H1 (cell line): ENCODE measurements at regions of chr19 and their contacts with region 1.

Region 1: GRCh38 chr19:53867225-53868090 is at the start of gene MYADM:
- DNase-seq: peak; percentile 96 to 100
- H3K4me3 ChIP-seq: peak within 1 kb of the TSS; percentile 69 to 94 (median 79)
- H3K27ac ChIP-seq: peak within 1 kb of the TSS; percentile 96
- H3K4me1 ChIP-seq: peaks cover 0 to 13% (median 8%) of the 10 kb centered on the region in 4 experiments; a peak in 6 of 7 replicates
- H3K27me3 ChIP-seq: no peaks in the 10 kb centered on the region
- CTCF ChIP-seq: no peak
- EP300 ChIP-seq: peak; percentile 85 to 99
- POLR2A ChIP-seq: peak in 1 of 2 experiments; percentile 72; a peak in 2 of 3 replicates
- RAD21 ChIP-seq: no peak
- total RNA-seq, gene MYADM: 70.1 and 70.5 TPM in 2 replicates

Region 2: DNA sequence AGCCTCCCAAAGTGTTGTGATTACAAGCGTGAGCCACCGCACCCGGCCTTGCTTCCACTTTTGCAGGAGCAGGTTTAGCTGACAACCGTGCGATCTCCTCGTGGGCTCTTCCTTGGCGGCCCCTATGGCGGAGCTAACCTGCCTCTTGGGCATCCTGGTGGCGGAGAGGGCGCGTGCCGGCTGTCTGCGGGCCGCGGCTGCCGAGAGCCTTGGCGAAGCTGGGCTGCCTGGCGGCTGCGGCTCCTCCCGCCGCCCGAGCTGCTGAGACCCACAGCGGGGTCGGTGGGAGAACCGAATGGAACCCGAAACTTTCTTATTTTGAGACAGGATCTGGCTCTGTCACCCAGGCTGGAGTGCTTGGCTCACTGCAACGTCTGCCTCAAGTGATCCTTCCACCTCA is 99.1 kb before region 1 on chr19:
- CTCF ChIA-PET with region 1: no interaction called
- POLR2A ChIA-PET with region 1: no interaction called
- DNase-seq: no peak
- H3K4me3 ChIP-seq: no peak overlapping the region
- H3K27ac ChIP-seq: no peak overlapping the region
- H3K4me1 ChIP-seq: peaks cover 0 to 16% (median 4%) of the 10 kb centered on the region in 4 experiments; a peak in 5 of 7 replicates
- H3K27me3 ChIP-seq: no peaks in the 10 kb centered on the region
- CTCF ChIP-seq: no peak
- EP300 ChIP-seq: no peak
- POLR2A ChIP-seq: no peak
- RAD21 ChIP-seq: no peak

Region 3: DNA sequence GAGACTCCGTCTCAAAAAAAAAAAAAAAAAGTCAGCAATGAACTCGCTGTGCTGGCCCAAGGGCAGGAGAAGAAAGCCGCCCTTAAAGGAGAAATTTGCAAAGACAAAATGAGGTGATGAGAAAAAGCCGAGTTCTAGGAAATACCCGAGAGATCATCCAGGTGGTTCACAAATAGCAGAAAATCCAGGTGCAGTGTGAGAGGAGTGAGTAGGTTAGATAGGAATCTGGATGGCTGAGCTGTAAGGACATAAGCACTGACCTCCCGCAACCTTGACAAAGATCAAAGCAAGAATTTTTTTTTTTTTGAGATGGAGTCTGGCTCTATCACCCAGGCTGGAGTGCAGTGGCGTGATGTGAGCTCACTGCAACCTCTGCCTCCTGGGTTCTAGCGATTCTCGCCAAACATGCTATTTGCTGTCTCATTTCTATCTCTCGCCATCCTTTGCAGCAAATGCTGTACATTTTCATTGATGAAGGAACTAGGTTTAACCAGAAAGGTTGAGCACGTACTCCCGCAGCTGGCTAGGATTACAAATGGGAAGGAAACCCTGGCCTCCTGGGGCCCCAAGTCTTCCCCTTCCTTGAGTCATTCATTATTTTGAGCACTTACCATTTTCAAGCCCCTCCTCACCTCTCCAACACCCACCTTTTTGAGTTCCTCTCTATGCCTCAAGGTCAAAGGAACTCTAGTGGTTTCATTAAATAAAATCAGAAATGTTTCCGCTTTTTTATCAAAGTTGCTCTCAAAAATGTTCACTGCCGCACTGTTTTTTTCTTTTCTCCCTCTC is 82.2 kb before region 1 on chr19:
- CTCF ChIA-PET with region 1: no interaction called
- POLR2A ChIA-PET with region 1: interaction called, 12 read pairs
- DNase-seq: no peak
- H3K4me3 ChIP-seq: no peak overlapping the region
- H3K27ac ChIP-seq: no peak overlapping the region
- H3K4me1 ChIP-seq: peaks cover 0 to 12% (median 4%) of the 10 kb centered on the region in 4 experiments; a peak in 5 of 7 replicates
- H3K27me3 ChIP-seq: no peaks in the 10 kb centered on the region
- CTCF ChIP-seq: no peak
- EP300 ChIP-seq: no peak
- POLR2A ChIP-seq: no peak
- RAD21 ChIP-seq: no peak

Region 4: GRCh38 chr19:53826876-53827275 is 40.6 kb before region 1 on chr19:
- CTCF ChIA-PET with region 1: no interaction called
- POLR2A ChIA-PET with region 1: interaction called, 11 read pairs
- DNase-seq: no peak
- H3K4me3 ChIP-seq: no peak overlapping the region
- H3K27ac ChIP-seq: no peak overlapping the region
- H3K4me1 ChIP-seq: peaks cover 0 to 14% (median 2%) of the 10 kb centered on the region in 4 experiments; a peak in 5 of 7 replicates
- H3K27me3 ChIP-seq: no peaks in the 10 kb centered on the region
- CTCF ChIP-seq: no peak
- EP300 ChIP-seq: no peak
- POLR2A ChIP-seq: no peak
- RAD21 ChIP-seq: no peak

Region 5: GRCh38 chr19:53879140-53880081 is 12.0 kb after region 1 on chr19:
- CTCF ChIA-PET with region 1: interaction called, 12 read pairs
- POLR2A ChIA-PET with region 1: interaction called, 96 read pairs
- DNase-seq: peak; percentile 92 to 100
- H3K4me3 ChIP-seq: peak overlapping the region; percentile 44 to 64 (median 60)
- H3K27ac ChIP-seq: peak overlapping the region; percentile 69
- H3K4me1 ChIP-seq: peaks cover 3 to 25% (median 8%) of the 10 kb centered on the region in 4 experiments
- H3K27me3 ChIP-seq: peaks cover 0 to 11% (median 3%) of the 10 kb centered on the region in 4 experiments; a peak in 4 of 7 replicates
- CTCF ChIP-seq: no peak
- EP300 ChIP-seq: no peak; a peak in 1 of 3 replicates
- POLR2A ChIP-seq: peak in 1 of 2 experiments; percentile 74; a peak in 2 of 3 replicates
- RAD21 ChIP-seq: no peak

Region 6: DNA sequence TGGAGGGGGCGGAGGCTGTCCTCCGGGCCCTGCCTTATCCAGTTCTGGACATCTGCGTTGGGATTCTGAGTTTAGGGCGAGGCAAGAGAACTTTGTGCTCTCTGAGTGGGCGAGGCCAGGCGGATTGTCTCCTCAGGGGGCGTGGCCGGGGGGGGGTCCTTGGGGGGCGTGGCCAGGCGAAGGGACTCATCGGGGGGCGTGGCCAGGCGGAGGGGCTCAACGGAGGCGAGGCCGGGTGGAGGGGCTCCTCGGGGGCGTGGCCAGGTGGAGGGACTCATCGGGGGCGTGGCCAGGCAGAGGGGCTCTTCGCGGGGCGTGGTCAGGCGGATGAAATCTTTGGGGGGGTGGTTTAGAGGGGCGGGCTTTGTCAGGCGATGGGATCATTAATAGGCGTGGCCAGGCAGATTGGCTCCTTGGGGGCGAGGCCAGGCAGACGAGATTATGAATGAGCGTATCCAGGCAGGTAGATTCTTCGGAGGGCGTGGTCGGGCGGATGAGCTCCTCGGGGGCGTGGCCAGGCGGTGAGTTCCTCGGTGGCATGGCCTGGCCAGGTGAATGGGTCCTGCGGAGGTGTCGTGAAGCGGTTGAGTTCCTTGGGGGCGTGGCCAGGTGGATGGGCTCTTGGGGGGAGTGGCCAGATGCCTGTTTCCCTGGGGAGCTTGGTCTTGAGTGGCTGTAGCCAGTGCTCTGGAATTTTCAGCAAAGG is 31.3 kb after region 1 on chr19:
- CTCF ChIA-PET with region 1: interaction called, 3 read pairs
- POLR2A ChIA-PET with region 1: interaction called, 13 read pairs
- DNase-seq: peak; percentile 99
- H3K4me3 ChIP-seq: peak overlapping the region; percentile 28 to 68 (median 56); a peak in 7 of 8 replicates
- H3K27ac ChIP-seq: no peak overlapping the region
- H3K4me1 ChIP-seq: peaks cover 0 to 14% (median 9%) of the 10 kb centered on the region in 4 experiments; a peak in 4 of 7 replicates
- H3K27me3 ChIP-seq: peaks cover 0 to 3% (median 0%) of the 10 kb centered on the region in 4 experiments; a peak in 1 of 7 replicates
- CTCF ChIP-seq: no peak
- EP300 ChIP-seq: no peak
- POLR2A ChIP-seq: no peak
- RAD21 ChIP-seq: no peak